ENCODE measurements at regions of chr10 and their contacts with region 1.

Region 1: DNA sequence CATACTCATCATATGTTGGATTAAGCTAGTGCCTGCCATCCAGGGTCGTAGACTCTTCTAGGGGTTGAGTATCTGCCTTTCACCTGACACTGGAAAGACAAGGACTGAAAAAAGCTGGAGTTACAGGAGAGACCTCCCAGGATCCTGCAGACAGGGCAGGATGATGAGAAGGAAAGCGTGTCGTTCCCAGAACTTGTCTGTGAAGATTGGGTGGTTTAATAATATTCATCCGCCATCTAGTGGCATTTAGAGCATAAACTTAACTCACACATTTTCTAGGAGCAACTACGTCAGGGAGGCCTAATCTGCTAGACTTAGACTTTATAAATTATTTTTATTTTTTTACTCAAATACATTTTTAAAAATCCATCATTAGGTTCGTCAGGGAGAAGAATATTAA is 59.6 kb downstream of the ADRB1 start:
- DNase-seq: peak; percentile 46
- ATAC-seq: peak; percentile 69
- H3K4me3 ChIP-seq: no peak overlapping the region
- H3K27ac ChIP-seq: no peak overlapping the region
- H3K4me1 ChIP-seq: peaks cover 23% of the 10 kb centered on the region
- H3K27me3 ChIP-seq: peaks cover 0 to 21% of the 10 kb centered on the region in 2 experiments; a peak in 4 of 5 replicates
- CTCF ChIP-seq: peak; percentile 70
- EP300 ChIP-seq: no peak
- POLR2A ChIP-seq: no peak
- RAD21 ChIP-seq: no peak

Region 2: DNA sequence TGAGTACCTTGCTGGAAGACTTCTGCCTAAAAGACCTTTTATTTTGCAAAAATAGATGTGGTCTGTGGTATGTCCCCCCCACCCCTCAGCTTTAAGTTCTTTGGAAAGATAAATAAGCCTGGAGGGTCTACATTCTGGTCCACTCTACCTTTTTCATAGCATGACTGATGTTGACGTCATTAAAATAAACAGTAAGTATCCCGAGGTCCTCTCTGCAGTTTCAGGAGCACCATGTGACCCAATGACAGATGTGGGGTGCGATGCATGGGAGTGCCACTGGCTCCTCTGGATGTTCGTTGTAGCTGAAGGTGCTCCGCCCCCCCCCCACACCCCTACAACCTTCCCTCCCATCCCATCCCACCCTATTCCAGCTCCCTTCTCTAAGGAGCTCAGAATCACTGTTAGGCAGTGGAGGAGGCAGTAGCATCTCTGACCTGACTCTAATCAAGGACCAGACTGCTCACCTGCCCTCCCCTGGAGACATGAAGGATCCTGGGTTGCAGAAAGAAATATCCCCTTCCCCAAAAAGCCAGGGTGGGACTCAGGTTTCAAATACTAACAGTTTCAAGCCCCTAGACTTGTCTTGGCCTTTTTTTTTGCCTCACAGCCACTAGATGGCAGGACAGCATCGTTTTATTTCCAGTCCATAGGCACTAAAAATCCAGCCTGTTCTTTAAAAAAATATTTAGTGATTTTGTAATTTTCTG is 398.5 kb before region 1 on chr10:
- CTCF ChIA-PET with region 1: interaction called, 8 read pairs
- POLR2A ChIA-PET with region 1: no interaction called
- in situ Hi-C with region 1: loop called (anchors 5 kb)
- intact Hi-C with region 1: loop called (anchors 1 kb)
- DNase-seq: peak; percentile 27
- ATAC-seq: peak; percentile 80
- H3K4me3 ChIP-seq: no peak overlapping the region
- H3K27ac ChIP-seq: no peak overlapping the region
- H3K4me1 ChIP-seq: no peaks in the 10 kb centered on the region
- H3K27me3 ChIP-seq: no peaks in the 10 kb centered on the region
- CTCF ChIP-seq: peak; percentile 65
- EP300 ChIP-seq: no peak
- POLR2A ChIP-seq: no peak
- RAD21 ChIP-seq: no peak

Region 3: DNA sequence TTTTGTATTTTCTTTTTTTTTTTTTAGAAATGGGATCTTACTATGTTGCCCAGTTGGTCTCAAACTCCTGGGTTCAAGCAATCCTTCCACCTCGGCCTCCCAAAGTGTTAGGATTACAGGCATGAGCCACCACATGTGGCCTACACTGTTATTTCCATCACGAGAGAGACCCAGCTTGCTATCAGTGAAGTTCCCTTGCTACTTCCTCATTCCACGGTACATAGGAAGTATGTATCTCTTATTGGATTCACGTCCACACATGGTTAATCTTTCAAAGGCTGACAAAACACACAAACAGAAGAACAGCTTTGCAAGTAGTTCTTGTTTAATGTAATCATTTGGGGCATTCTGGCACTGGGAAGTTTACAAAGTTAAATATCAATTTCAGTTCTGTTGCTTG is 300.3 kb before region 1 on chr10:
- CTCF ChIA-PET with region 1: interaction called, 42 read pairs
- POLR2A ChIA-PET with region 1: no interaction called
- in situ Hi-C with region 1: loop called (anchors 5 kb)
- intact Hi-C with region 1: loop called (anchors 1 kb)
- DNase-seq: no peak
- ATAC-seq: no peak
- H3K4me3 ChIP-seq: no peak overlapping the region
- H3K27ac ChIP-seq: no peak overlapping the region
- H3K4me1 ChIP-seq: no peaks in the 10 kb centered on the region
- H3K27me3 ChIP-seq: peaks cover 0 to 3% of the 10 kb centered on the region in 2 experiments; a peak in 1 of 5 replicates
- CTCF ChIP-seq: no peak
- EP300 ChIP-seq: no peak
- POLR2A ChIP-seq: no peak
- RAD21 ChIP-seq: no peak

Region 4: DNA sequence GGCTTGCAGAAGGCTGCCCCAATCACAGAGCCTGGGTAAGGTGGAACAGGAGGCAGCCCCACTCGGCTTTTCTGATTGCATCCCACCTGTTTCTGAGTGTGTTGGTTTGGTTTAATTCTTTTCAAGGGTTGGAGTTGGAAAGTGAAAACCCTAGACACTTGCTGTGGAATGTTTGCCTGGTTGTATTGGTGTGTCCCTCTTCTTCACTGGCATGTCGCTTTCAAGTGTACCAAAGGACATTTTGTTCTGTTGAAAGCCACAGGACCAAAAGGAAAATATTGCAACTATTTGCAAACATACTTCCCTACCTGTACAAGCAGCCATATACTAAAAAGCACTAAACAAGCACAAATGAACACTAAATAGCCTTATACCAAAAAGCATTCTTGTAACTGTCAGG is 188.3 kb before region 1 on chr10:
- CTCF ChIA-PET with region 1: no interaction called
- POLR2A ChIA-PET with region 1: no interaction called
- in situ Hi-C with region 1: no loop called
- intact Hi-C with region 1: loop called (anchors 10 kb)
- DNase-seq: no peak
- ATAC-seq: no peak
- H3K4me3 ChIP-seq: no peak overlapping the region
- H3K27ac ChIP-seq: no peak overlapping the region
- H3K4me1 ChIP-seq: no peaks in the 10 kb centered on the region
- H3K27me3 ChIP-seq: no peaks in the 10 kb centered on the region
- CTCF ChIP-seq: no peak
- EP300 ChIP-seq: no peak
- POLR2A ChIP-seq: no peak
- RAD21 ChIP-seq: no peak

Region 5: GRCh38 chr10:114077815-114078219 is 25.5 kb before region 1 on chr10:
- CTCF ChIA-PET with region 1: no interaction called
- POLR2A ChIA-PET with region 1: no interaction called
- in situ Hi-C with region 1: no loop called
- intact Hi-C with region 1: no loop called
- DNase-seq: no peak
- ATAC-seq: peak; percentile 65
- H3K4me3 ChIP-seq: no peak overlapping the region
- H3K27ac ChIP-seq: no peak overlapping the region
- H3K4me1 ChIP-seq: peaks cover 7% of the 10 kb centered on the region; the same call in 1 of the 2 replicates
- H3K27me3 ChIP-seq: peaks cover 0 to 5% of the 10 kb centered on the region in 2 experiments; a peak in 2 of 5 replicates
- CTCF ChIP-seq: no peak
- EP300 ChIP-seq: no peak
- POLR2A ChIP-seq: no peak
- RAD21 ChIP-seq: no peak

Measured in HepG2 (cell line).